H1 (cell line): ENCODE measurements at regions of chr12 and their contacts with region 1.

Region 1: GRCh38 chr12:115916910-115917668 is 360.4 kb downstream of the MED13L start:
- DNase-seq: peak; percentile 62 to 99
- H3K4me3 ChIP-seq: peak overlapping the region; percentile 4 to 64 (median 38); a peak in 7 of 8 replicates
- H3K27ac ChIP-seq: no peak overlapping the region
- H3K4me1 ChIP-seq: peaks cover 0 to 3% (median under 1%) of the 10 kb centered on the region in 4 experiments; a peak in 2 of 7 replicates
- H3K27me3 ChIP-seq: peaks cover 0 to 7% (median 4%) of the 10 kb centered on the region in 4 experiments; a peak in 3 of 7 replicates
- CTCF ChIP-seq: peak; percentile 88 to 99 (median 96)
- EP300 ChIP-seq: no peak; a peak in 1 of 3 replicates
- POLR2A ChIP-seq: no peak
- RAD21 ChIP-seq: peak; percentile 99

Region 2: DNA sequence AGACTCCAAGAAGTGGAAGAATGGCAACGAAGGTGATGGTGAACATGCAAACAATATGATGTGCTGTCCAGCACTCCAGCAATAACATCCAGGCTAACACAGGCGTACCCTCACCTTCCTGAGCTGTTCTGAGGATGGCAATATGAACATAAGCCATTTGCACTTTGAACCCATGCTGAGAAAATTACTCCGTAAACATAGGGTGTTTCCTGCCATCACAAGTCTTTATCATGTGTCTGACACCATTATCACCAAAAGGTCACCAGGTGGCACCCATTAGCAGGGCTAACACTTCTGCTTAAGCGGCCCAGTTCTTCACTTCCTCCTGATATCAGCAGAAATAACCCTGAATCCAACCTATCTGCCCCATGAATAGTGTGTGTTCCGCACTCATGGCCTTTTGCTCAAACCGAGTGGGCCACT is 122.4 kb before region 1 on chr12:
- CTCF ChIA-PET with region 1: interaction called, 14 read pairs
- POLR2A ChIA-PET with region 1: no interaction called
- DNase-seq: no peak
- H3K4me3 ChIP-seq: no peak overlapping the region
- H3K27ac ChIP-seq: no peak overlapping the region
- H3K4me1 ChIP-seq: no peaks in the 10 kb centered on the region
- H3K27me3 ChIP-seq: no peaks in the 10 kb centered on the region
- CTCF ChIP-seq: peak in 2 of 3 experiments; percentile 19 to 34; a peak in 2 of 4 replicates
- EP300 ChIP-seq: no peak
- POLR2A ChIP-seq: no peak
- RAD21 ChIP-seq: peak; percentile 49 to 53

Region 3: GRCh38 chr12:115946867-115947696 is 30.0 kb after region 1 on chr12:
- CTCF ChIA-PET with region 1: interaction called, 17 read pairs
- POLR2A ChIA-PET with region 1: interaction called, 4 read pairs
- DNase-seq: no peak
- H3K4me3 ChIP-seq: no peak overlapping the region
- H3K27ac ChIP-seq: no peak overlapping the region
- H3K4me1 ChIP-seq: peaks cover 0 to 6% (median 2%) of the 10 kb centered on the region in 4 experiments; a peak in 4 of 7 replicates
- H3K27me3 ChIP-seq: no peaks in the 10 kb centered on the region
- CTCF ChIP-seq: peak in 2 of 3 experiments; percentile 53 to 57; a peak in 2 of 4 replicates
- EP300 ChIP-seq: no peak
- POLR2A ChIP-seq: no peak
- RAD21 ChIP-seq: peak; percentile 69 to 76

Region 4: GRCh38 chr12:115983226-115983798 is 66.2 kb after region 1 on chr12:
- CTCF ChIA-PET with region 1: no interaction called
- POLR2A ChIA-PET with region 1: no interaction called
- DNase-seq: peak; percentile 25 to 75
- H3K4me3 ChIP-seq: no peak overlapping the region
- H3K27ac ChIP-seq: no peak overlapping the region
- H3K4me1 ChIP-seq: peaks cover 2 to 7% (median 6%) of the 10 kb centered on the region in 4 experiments; a peak in 4 of 7 replicates
- H3K27me3 ChIP-seq: no peaks in the 10 kb centered on the region
- CTCF ChIP-seq: peak; percentile 76 to 90 (median 81)
- EP300 ChIP-seq: no peak
- POLR2A ChIP-seq: no peak
- RAD21 ChIP-seq: peak; percentile 86 to 87